Left ventricle myocardium superior (tissue), 1 donor: ENCODE measurements at regions of chr1 and their contacts with region 1.

Region 1: GRCh38 chr1:46132529-46133180 is at the start of gene PIK3R3:
- DNase-seq: peak; percentile 98
- ATAC-seq: peak; percentile 96
- total RNA-seq, gene PIK3R3: 26.2 TPM

Region 2: DNA sequence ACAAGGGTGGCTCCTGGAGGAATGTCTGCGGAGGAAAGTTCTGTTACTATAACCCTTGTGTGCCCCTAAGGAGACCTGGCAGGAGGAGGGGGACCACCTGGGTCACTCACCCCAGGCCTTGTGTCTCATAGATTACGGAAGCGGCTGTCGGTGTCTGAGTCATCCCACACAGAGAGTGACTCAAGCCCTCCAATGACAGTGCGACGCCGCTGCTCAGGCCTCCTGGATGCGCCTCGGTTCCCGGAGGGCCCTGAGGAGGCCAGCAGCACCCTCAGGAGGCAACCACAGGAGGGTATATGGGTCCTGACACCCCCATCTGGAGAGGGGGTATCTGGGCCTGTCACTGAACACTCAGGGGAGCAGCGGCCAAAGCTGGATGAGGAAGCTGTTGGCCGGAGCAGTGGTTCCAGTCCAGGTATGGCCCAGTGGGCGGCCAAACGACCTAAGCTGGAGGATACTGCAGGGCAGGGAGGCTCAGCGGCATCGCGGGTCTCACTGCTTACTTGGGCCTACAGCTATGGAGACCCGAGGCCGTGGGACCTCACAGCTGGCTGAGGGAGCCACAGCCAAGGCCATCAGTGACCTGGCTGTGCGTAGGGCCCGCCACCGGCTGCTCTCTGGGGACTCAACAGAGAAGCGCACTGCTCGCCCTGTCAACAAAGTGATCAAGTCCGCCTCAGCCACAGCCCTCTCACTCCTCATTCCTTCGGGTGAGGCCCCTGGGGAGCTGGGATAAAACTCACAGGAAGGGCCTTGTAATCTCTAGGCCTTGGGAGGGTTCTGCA is 101.6 kb before region 1 on chr1:
- intact Hi-C with region 1: no loop called
- DNase-seq: no peak
- ATAC-seq: no peak

Region 3: GRCh38 chr1:46043458-46044017 is 89.1 kb before region 1 on chr1:
- intact Hi-C with region 1: loop called (anchors 10 kb)
- DNase-seq: no peak
- ATAC-seq: no peak

Region 4: DNA sequence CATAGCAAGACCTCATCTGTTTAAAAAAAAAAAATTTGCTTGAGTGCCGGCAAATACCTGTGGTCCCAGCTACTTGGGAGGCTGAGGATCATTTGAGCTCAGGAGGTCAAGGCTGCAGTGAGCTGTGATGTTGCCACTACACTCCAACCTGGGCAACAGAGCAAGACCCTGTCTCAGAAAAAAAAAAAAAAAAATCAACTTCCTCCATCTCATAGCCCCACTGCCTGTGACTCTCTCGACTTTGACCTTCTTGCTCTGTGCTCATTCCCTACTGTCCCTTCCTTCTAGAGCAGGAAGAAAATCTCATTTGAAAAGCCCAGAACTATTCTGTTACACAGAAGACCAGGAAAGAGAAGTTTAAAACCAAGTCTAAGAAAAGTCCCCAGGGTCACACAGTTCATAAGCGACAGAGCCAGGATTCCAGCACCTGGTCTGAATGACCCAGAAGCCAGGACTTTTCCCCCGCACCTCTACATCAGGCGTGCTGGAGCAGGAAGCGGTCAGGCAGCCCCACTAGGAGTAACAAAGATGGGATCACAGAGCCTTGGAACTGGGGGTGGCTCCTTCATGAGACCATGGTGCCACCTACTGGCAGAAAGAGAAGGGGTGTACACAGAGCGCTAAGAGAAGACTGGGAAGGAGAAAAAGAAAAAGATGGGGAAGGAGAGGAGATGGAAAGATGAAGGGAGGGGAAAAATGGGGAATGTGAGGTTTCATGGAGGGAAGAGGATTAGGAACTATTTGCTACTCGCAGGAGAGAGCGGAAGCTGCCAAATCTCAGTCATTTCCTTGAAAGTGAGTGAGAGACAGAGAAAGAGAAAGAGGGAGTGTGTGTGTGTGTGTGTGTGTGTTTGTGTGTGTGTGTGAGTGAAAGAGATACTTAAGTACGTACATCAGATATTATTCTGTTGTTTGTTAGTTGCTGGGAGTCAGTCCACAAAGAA is 46.8 kb after region 1 on chr1:
- intact Hi-C with region 1: loop called (anchors 5 kb)
- DNase-seq: peak; percentile 68
- ATAC-seq: peak; percentile 78

Region 5: GRCh38 chr1:46244656-46245371 is 112.2 kb after region 1 on chr1:
- intact Hi-C with region 1: no loop called
- DNase-seq: no peak
- ATAC-seq: no peak

Region 6: DNA sequence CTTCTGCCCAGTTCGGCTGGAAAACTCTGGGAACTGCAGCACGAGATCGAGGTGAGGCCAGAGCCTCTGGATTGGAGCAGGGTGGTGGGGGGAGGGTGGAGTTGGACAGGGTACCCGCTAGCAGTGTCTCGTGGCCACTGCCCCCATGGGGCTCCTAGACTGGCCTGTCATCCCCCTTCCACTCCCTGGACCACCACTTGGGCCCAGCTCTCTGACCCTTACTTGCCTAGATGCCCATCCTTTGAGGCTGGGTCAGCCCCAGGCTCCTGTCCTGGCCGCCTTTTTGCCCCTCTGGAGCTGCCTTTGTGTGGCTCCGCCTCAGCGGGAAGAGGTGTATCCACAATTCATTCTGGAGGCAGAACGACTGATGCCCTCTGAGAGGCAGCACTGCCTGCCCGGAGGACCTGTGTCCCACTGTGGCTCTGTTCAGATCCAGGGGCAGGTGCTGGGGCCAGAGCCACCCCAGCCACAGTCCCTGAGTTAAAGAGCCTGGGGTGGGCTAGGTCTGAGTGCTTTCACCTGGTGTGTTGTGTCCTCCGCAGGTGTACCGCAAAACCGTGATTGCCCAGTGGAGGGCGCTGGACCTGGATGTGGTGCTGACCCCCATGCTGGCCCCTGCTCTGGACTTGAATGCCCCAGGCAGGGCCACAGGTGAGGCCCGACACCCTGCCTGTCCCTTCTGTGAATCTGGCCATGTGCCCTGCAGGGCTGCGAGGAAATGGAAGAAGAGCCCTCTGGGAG is 279.1 kb after region 1 on chr1:
- intact Hi-C with region 1: no loop called
- DNase-seq: no peak
- ATAC-seq: no peak